Left ventricle myocardium inferior (tissue), 1 donor: ENCODE measurements at regions of chr4 and their contacts with region 1.

Region 1: GRCh38 chr4:121421594-121421993 is 40.8 kb upstream of the QRFPR start:
- DNase-seq: no peak
- H3K4me3 ChIP-seq: peak overlapping the region; percentile 48
- H3K27ac ChIP-seq: no peak overlapping the region
- H3K4me1 ChIP-seq: no peaks in the 10 kb centered on the region
- H3K27me3 ChIP-seq: no peaks in the 10 kb centered on the region
- CTCF ChIP-seq: peak; percentile 70

Region 2: GRCh38 chr4:121370729-121371325 is 50.8 kb before region 1 on chr4:
- intact Hi-C with region 1: loop called (anchors 5 kb)
- DNase-seq: peak; percentile 22
- H3K4me3 ChIP-seq: no peak overlapping the region
- H3K27ac ChIP-seq: no peak overlapping the region
- H3K4me1 ChIP-seq: no peaks in the 10 kb centered on the region
- H3K27me3 ChIP-seq: no peaks in the 10 kb centered on the region
- CTCF ChIP-seq: peak; percentile 76

Region 3: GRCh38 chr4:121554382-121554781 is 132.8 kb after region 1 on chr4:
- intact Hi-C with region 1: no loop called
- DNase-seq: no peak
- H3K4me3 ChIP-seq: no peak overlapping the region
- H3K27ac ChIP-seq: peak overlapping the region; percentile 79
- H3K4me1 ChIP-seq: peaks cover 32% of the 10 kb centered on the region
- H3K27me3 ChIP-seq: no peaks in the 10 kb centered on the region
- CTCF ChIP-seq: no peak

Region 4: DNA sequence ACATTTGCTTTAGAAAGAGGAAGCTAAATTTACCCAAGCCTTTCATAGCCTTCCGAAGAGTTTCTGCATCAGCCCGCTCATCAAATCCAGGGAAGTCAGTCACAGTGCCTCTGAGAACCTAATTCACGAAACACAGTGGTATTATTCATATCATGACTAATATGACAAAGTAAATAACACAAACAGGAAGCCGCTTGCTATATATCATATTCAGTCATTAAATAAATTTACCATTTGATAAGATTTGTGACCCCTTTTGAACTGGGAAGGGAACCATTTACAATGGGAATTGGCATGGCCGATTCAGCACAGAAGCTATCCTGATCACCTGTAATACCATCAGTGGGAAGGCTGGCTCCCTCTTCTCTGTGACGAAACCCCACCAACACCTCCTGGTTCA is 264.7 kb after region 1 on chr4:
- intact Hi-C with region 1: no loop called
- DNase-seq: no peak
- H3K4me3 ChIP-seq: no peak overlapping the region
- H3K27ac ChIP-seq: no peak overlapping the region
- H3K4me1 ChIP-seq: peaks cover 45% of the 10 kb centered on the region
- H3K27me3 ChIP-seq: no peaks in the 10 kb centered on the region
- CTCF ChIP-seq: no peak